ENCODE measurements at regions of chr15 and their contacts with region 1.

Region 1: DNA sequence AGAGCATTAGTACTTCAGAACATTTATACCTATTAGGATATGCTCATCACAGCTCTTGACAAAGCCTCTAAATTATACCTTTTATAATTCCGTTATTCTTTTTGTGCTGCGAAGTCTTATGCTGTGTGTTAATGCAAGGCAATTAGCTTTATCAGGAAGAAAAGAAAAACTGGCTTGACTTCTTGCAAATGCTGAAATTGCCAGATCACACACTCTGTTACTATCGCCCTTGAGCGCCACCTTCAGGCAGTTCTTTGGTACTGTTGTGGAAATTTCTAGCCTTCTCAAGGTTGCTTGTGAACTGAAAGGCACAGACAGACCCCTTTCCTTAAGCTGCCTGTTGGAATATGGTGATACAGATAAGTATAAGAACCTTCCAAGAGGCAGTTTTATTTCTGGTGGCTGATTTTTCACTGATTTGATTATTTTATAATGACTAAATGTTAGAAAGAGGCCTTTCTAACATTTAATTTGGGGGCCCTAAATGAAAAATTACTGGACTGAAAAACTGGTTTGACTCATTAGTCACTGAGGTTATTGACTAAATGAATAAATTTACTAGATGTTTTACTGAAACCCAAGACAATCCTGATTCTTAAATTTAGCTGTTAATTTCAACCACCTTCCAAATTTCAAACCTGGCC is 126.2 kb upstream of the RASGRP1 start:
- DNase-seq: peak; percentile 81
- H3K4me3 Mint-ChIP-seq: no peak overlapping the region
- H3K27ac Mint-ChIP-seq: no peak overlapping the region
- H3K4me1 Mint-ChIP-seq: peaks cover 6% of the 10 kb centered on the region
- H3K27me3 Mint-ChIP-seq: no peaks in the 10 kb centered on the region
- CTCF ChIP-seq: peak; percentile 78

Region 2: DNA sequence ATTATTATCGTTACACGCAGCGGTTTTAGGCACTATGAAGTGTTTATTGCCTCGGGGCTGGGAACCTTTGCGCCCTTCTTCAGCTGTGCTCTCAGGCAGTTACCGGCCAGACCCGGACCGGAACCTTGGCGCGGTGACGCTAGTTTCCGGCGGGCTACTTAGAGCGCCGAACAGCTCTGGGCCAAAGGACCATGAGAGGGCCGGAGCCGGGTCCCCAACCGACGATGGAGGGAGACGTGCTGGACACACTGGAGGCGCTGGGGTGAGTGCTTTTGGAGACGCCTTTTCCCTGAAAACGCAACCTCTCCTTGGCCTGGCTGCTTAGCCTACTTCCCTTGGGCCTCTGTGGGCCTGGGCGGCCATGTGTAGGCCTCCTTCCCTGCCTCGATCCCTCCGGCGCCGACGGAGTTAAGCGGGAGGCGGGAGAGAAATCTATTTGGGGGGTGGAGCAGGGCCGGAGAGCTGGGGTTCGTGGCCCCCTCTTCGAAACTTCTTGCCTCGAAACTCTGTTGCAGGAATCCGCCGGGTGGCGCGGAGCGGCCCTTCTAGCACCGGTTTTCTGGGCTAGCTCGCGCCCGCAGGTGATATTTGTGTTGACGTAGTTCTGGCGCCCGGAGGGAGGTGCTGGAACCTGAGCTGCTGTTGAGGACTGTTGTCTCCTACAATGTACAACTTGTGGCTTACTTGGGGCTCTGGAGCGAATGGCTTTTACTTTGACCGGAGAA is 236.7 kb before region 1 on chr15 and contains the start of gene FAM98B:
- CTCF ChIA-PET with region 1: interaction called, 16 read pairs
- POLR2A ChIA-PET with region 1: no interaction called
- intact Hi-C with region 1: no loop called
- DNase-seq: peak; percentile 90
- H3K4me3 Mint-ChIP-seq: peak within 1 kb of the TSS; percentile 91
- H3K27ac Mint-ChIP-seq: peak within 1 kb of the TSS; percentile 97
- H3K4me1 Mint-ChIP-seq: peaks cover 20% of the 10 kb centered on the region
- H3K27me3 Mint-ChIP-seq: peaks cover 30% of the 10 kb centered on the region
- CTCF ChIP-seq: no peak
- total RNA-seq, gene FAM98B: 26.5 and 33.1 TPM in 2 replicates

Region 3: GRCh38 chr15:38671675-38672254 is 19.0 kb before region 1 on chr15:
- CTCF ChIA-PET with region 1: interaction called, 19 read pairs
- POLR2A ChIA-PET with region 1: no interaction called
- intact Hi-C with region 1: no loop called
- DNase-seq: no peak
- H3K4me3 Mint-ChIP-seq: no peak overlapping the region
- H3K27ac Mint-ChIP-seq: no peak overlapping the region
- H3K4me1 Mint-ChIP-seq: no peaks in the 10 kb centered on the region
- H3K27me3 Mint-ChIP-seq: peaks cover 14% of the 10 kb centered on the region
- CTCF ChIP-seq: no peak

Measured in MCF 10A (cell line).